SK-N-SH (cell line): ENCODE measurements at regions of chr17 and their contacts with region 1.

Region 1: DNA sequence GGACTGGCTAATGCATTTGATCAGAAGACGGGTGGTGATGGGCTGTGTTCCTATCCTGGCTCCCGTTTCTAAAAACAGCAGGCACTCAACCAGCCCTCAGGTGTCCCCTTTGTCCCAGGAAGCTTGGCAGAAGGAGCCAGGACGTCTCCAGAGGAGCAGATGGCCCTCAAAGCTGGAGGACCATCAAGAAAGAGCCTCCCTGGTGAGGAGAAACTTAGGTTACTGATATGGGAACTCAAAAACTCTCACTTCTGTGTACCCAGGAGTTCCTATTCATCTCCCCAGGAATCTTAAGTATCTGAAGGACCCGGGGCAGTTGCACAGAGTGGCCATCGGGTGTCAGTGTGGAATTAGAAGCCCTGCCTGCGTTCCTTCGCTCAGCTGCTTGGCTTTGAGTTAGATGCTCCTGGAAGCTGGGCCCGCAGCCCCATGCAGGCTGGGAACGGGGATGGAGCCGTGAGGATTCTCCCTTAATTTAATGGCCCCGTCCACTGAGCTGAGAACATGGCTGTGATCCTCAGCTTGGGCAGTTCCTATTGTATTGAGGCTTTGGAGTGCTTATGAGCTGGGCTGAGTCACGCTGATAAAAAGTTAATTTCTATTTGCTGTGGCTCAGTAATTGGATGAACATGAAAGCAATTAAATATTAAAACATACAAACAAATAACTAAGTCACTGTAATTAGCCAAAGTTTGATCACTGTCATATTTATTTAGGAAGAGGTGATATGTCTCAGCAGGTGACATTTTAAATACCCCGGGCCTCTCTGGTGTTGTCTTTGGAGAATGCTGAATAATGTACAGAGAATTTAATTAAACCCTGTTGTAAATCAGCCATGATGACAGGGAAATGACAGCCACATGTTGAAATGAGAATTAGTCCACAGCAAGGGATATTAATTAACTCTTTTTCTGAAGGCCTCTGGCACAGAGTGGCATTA is 402.1 kb downstream of the SEC14L1 start:
- DNase-seq: peak; percentile 94
- H3K4me3 ChIP-seq: peak overlapping the region in 1 of 2 experiments; percentile 8; a peak in 1 of 4 replicates
- H3K27ac ChIP-seq: 0 out of 4 replicates have a peak overlapping the region, but pooled peaks of 1 of the 2 experiments have one; percentile 18
- H3K4me1 ChIP-seq: peaks cover 4 to 23% of the 10 kb centered on the region in 2 experiments; a peak in 2 of 4 replicates
- H3K27me3 ChIP-seq: peaks cover 52% of the 10 kb centered on the region
- CTCF ChIP-seq: peak; percentile 99
- EP300 ChIP-seq: peak in 1 of 2 experiments; percentile 69; a peak in 1 of 4 replicates
- RAD21 ChIP-seq: peak; percentile 100

Region 2: GRCh38 chr17:77382966-77383612 is 159.7 kb before region 1 on chr17:
- CTCF ChIA-PET with region 1: no interaction called
- POLR2A ChIA-PET with region 1: no interaction called
- DNase-seq: no peak
- H3K4me3 ChIP-seq: no peak overlapping the region
- H3K27ac ChIP-seq: peak overlapping the region in 1 of 2 experiments; percentile 12; a peak in 1 of 4 replicates
- H3K4me1 ChIP-seq: peaks cover 15 to 94% of the 10 kb centered on the region in 2 experiments; a peak in 3 of 4 replicates
- H3K27me3 ChIP-seq: no peaks in the 10 kb centered on the region
- CTCF ChIP-seq: no peak
- EP300 ChIP-seq: no peak
- RAD21 ChIP-seq: no peak

Region 3: GRCh38 chr17:77429919-77430752 is 112.7 kb before region 1 on chr17:
- CTCF ChIA-PET with region 1: interaction called, 22 read pairs
- POLR2A ChIA-PET with region 1: no interaction called
- DNase-seq: peak; percentile 93
- H3K4me3 ChIP-seq: peak overlapping the region in 1 of 2 experiments; percentile 42; a peak in 1 of 4 replicates
- H3K27ac ChIP-seq: peak overlapping the region; percentile 78 to 97
- H3K4me1 ChIP-seq: peaks cover 82 to 87% of the 10 kb centered on the region in 2 experiments
- H3K27me3 ChIP-seq: no peaks in the 10 kb centered on the region
- CTCF ChIP-seq: peak; percentile 99
- EP300 ChIP-seq: peak; percentile 80 to 98
- RAD21 ChIP-seq: peak; percentile 98

Region 4: DNA sequence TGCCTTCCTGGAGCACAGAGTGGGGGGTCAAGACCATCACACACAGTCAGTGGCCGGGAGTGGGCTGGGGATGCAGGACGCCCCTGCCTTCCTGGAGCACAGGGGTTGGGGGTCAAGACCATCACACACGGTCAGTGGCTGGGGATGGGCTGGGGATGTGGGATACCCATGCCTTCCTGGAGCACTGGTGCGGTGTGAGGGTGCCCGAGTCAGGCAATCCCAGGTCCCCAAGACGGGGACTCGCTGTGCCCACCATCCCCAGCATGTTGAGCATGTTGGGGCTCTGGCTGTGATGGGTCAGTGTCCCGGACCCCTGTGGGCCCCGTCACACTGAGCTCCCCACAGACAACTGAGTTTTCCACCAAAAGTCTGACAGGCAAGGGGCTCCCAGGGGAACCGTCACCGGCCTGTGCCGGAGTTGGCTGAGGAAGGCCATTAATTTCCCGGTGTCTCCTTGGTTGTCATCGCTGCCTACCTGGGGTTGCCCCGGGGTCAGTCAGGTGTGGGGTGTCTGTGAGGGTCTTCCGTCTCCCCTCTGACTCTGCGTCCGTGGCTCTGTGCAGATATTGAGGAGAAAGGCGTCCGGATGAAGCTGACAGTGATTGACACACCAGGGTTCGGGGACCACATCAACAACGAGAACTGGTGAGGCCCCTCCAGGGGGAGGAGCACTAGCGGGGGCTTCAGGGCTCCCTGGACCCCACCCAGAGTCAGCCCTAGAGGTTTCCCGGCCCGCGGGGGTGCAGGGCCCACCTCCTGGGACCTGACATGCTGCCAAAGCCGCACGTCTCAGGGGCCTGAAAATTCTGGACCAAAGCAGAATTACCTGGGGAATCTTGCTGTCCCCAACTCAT is 54.9 kb before region 1 on chr17:
- CTCF ChIA-PET with region 1: no interaction called
- POLR2A ChIA-PET with region 1: no interaction called
- DNase-seq: no peak
- H3K4me3 ChIP-seq: no peak overlapping the region
- H3K27ac ChIP-seq: no peak overlapping the region
- H3K4me1 ChIP-seq: no peaks in the 10 kb centered on the region
- H3K27me3 ChIP-seq: no peaks in the 10 kb centered on the region
- CTCF ChIP-seq: no peak
- EP300 ChIP-seq: no peak
- RAD21 ChIP-seq: no peak

Region 5: GRCh38 chr17:77566151-77566550 is 23.3 kb after region 1 on chr17:
- CTCF ChIA-PET with region 1: interaction called, 11 read pairs
- POLR2A ChIA-PET with region 1: no interaction called
- DNase-seq: no peak
- H3K4me3 ChIP-seq: no peak overlapping the region
- H3K27ac ChIP-seq: no peak overlapping the region
- H3K4me1 ChIP-seq: no peaks in the 10 kb centered on the region; a peak in 1 of 4 replicates
- H3K27me3 ChIP-seq: peaks cover 44% of the 10 kb centered on the region
- CTCF ChIP-seq: no peak
- EP300 ChIP-seq: no peak
- RAD21 ChIP-seq: no peak

Region 6: GRCh38 chr17:77724876-77725615 is 182.2 kb after region 1 on chr17:
- CTCF ChIA-PET with region 1: interaction called, 27 read pairs
- POLR2A ChIA-PET with region 1: interaction called, 4 read pairs
- DNase-seq: no peak
- H3K4me3 ChIP-seq: no peak overlapping the region
- H3K27ac ChIP-seq: no peak overlapping the region
- H3K4me1 ChIP-seq: peaks cover 0 to 52% of the 10 kb centered on the region in 2 experiments; a peak in 1 of 4 replicates
- H3K27me3 ChIP-seq: peaks cover 8% of the 10 kb centered on the region; the same call in 1 of the 2 replicates
- CTCF ChIP-seq: no peak
- EP300 ChIP-seq: no peak
- RAD21 ChIP-seq: no peak

Region 7: GRCh38 chr17:77786740-77787505 is 244.1 kb after region 1 on chr17:
- CTCF ChIA-PET with region 1: interaction called, 10 read pairs
- POLR2A ChIA-PET with region 1: no interaction called
- DNase-seq: peak; percentile 91
- H3K4me3 ChIP-seq: no peak overlapping the region
- H3K27ac ChIP-seq: no peak overlapping the region
- H3K4me1 ChIP-seq: peaks cover 0 to 20% of the 10 kb centered on the region in 2 experiments; a peak in 1 of 4 replicates
- H3K27me3 ChIP-seq: peaks cover 23% of the 10 kb centered on the region
- CTCF ChIP-seq: no peak
- EP300 ChIP-seq: peak in 1 of 2 experiments; percentile 15; a peak in 1 of 4 replicates
- RAD21 ChIP-seq: peak; percentile 32

Region 8: GRCh38 chr17:77821097-77821496 is 278.3 kb after region 1 on chr17:
- CTCF ChIA-PET with region 1: interaction called, 45 read pairs
- POLR2A ChIA-PET with region 1: no interaction called
- DNase-seq: peak; percentile 61
- H3K4me3 ChIP-seq: no peak overlapping the region
- H3K27ac ChIP-seq: no peak overlapping the region
- H3K4me1 ChIP-seq: peaks cover 0 to 13% of the 10 kb centered on the region in 2 experiments; a peak in 1 of 4 replicates
- H3K27me3 ChIP-seq: no peaks in the 10 kb centered on the region
- CTCF ChIP-seq: peak; percentile 31
- EP300 ChIP-seq: no peak
- RAD21 ChIP-seq: peak; percentile 60

Region 9: DNA sequence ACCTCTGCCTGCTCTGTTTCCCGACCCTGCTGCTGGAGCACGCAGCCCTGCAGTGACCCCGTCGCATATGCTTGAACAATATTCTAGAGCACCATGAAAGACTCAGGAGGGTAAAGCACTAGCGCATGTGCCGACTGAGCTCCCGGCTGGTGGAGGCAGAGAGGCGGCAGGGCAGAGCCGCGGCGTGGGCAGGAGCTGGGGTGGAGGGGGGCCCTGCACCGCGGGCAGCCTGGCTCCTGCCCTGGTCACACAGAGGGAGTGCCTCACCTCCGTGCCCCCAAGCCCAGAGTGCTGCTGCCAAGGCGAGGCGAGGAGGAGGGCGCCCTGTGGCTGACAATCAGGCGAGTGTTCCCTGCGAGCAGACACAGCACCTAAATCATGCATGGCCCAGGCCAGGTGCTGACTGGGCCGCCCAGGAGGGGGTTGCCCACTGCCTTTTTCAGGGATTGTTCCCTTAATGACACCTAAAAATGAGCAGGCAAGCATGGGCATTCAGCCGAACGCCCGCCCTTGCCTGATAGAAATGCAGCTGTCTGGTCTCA is 309.9 kb after region 1 on chr17:
- CTCF ChIA-PET with region 1: no interaction called
- POLR2A ChIA-PET with region 1: no interaction called
- DNase-seq: no peak
- H3K4me3 ChIP-seq: no peak overlapping the region
- H3K27ac ChIP-seq: no peak overlapping the region
- H3K4me1 ChIP-seq: peaks cover 0 to 5% of the 10 kb centered on the region in 2 experiments; a peak in 1 of 4 replicates
- H3K27me3 ChIP-seq: no peaks in the 10 kb centered on the region
- CTCF ChIP-seq: no peak
- EP300 ChIP-seq: no peak
- RAD21 ChIP-seq: no peak

Region 10: GRCh38 chr17:77957857-77958715 is 415.3 kb after region 1 on chr17 and contains the start of gene TNRC6C:
- CTCF ChIA-PET with region 1: interaction called, 20 read pairs
- POLR2A ChIA-PET with region 1: interaction called, 22 read pairs
- DNase-seq: peak; percentile 100
- H3K4me3 ChIP-seq: peak within 1 kb of the TSS; percentile 80 to 86
- H3K27ac ChIP-seq: peak within 1 kb of the TSS in 1 of 2 experiments; percentile 92; a peak in 2 of 4 replicates
- H3K4me1 ChIP-seq: peaks cover 0 to 35% of the 10 kb centered on the region in 2 experiments; a peak in 3 of 4 replicates
- H3K27me3 ChIP-seq: peaks cover 42% of the 10 kb centered on the region; the same call in 1 of the 2 replicates
- CTCF ChIP-seq: no peak
- EP300 ChIP-seq: no peak; a peak in 1 of 4 replicates
- RAD21 ChIP-seq: peak; percentile 22; the same call in 1 of the 2 replicates
- polyA plus RNA-seq, gene TNRC6C: 1.6 and 2.2 TPM in 2 replicates